ENCODE measurements at regions of chr2 and their contacts with region 1.

Region 1: DNA sequence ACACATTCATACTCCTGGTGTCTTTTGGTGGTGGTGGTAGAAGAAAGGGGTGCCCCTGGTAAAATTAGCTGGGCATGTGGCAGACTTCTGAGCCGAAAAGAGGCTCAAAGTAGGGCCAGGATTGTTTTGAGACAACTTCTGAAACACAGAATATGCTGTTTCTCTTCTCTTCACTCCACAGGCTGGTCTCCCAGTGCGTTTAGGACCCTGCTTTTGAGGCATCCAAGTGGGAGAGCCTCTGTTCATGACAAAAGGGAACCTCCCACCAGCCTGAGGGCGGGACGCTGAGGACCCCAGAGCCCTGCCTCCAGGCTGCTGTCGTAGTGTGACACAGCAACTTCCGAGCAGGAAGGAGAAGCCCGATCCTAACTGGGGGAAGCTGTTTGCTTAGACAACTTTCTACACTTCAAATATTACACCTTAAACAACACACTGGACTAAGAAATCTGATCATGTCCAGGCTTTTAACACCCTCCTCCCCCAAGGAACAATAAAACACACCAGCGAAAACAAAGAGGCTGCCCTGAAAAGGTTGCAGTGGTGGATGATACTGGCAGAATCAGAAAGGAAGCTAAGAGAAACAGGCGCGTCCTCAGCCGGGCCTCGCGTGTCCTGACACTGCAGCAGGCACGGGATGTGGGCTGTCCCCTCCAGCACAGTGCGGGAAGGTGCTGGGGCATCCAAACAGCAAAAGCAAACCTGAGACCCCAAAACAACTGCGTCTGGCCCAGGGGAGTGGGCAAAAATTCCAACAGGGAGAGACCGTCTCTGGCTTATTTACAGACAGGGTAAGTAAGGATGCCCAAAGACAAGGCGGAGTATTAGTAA is 9.3 kb downstream of the SERTAD2 start:
- DNase-seq: peak in 10 of 14 experiments; percentile 26 to 68 (median 44)
- ATAC-seq: peak; percentile 75
- H3K4me3 ChIP-seq: peak overlapping the region; percentile 40
- H3K4me3 Mint-ChIP-seq: peak overlapping the region; percentile 90
- H3K27ac ChIP-seq: peak overlapping the region in 1 of 2 donors; percentile 24
- H3K27ac Mint-ChIP-seq: peak overlapping the region; percentile 73
- H3K4me1 ChIP-seq: peaks cover 37% of the 10 kb centered on the region
- H3K4me1 Mint-ChIP-seq: peaks cover 93% of the 10 kb centered on the region
- H3K27me3 ChIP-seq: no peaks in the 10 kb centered on the region
- H3K27me3 Mint-ChIP-seq: no peaks in the 10 kb centered on the region
- CTCF ChIP-seq: no peak

Region 2: DNA sequence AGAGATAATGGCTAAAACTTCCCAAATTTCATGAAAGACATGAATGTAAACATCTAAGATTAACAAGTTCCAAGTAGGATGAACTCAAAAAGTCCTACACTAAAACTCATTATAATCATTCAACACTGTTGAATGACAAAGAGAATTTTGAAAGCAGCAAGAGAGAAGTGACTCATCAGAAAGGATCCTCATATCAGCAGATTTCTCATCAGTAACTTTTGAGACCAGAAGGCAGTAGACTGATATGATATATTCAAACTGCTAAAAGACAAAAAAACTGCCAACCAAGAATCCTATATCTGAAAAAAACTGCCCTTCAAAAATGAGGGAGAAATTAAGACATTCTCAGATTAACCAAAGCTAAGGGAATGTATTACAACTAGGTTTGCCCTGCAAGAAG is 1724.3 kb before region 1 on chr2:
- CTCF ChIA-PET with region 1: no interaction called
- POLR2A ChIA-PET with region 1: no interaction called
- intact Hi-C with region 1: no loop called
- DNase-seq: no peak
- ATAC-seq: no peak
- H3K4me3 ChIP-seq: no peak overlapping the region
- H3K4me3 Mint-ChIP-seq: no peak overlapping the region
- H3K27ac ChIP-seq: no peak overlapping the region
- H3K27ac Mint-ChIP-seq: no peak overlapping the region
- H3K4me1 ChIP-seq: no peaks in the 10 kb centered on the region
- H3K4me1 Mint-ChIP-seq: no peaks in the 10 kb centered on the region
- H3K27me3 ChIP-seq: no peaks in the 10 kb centered on the region
- H3K27me3 Mint-ChIP-seq: no peaks in the 10 kb centered on the region
- CTCF ChIP-seq: no peak

Region 3: GRCh38 chr2:64574871-64575270 is 69.5 kb before region 1 on chr2:
- CTCF ChIA-PET with region 1: no interaction called
- POLR2A ChIA-PET with region 1: no interaction called
- intact Hi-C with region 1: no loop called
- DNase-seq: no peak
- ATAC-seq: no peak
- H3K4me3 ChIP-seq: no peak overlapping the region
- H3K4me3 Mint-ChIP-seq: no peak overlapping the region
- H3K27ac ChIP-seq: no peak overlapping the region
- H3K27ac Mint-ChIP-seq: peak overlapping the region; percentile 7
- H3K4me1 ChIP-seq: no peaks in the 10 kb centered on the region
- H3K4me1 Mint-ChIP-seq: no peaks in the 10 kb centered on the region
- H3K27me3 ChIP-seq: no peaks in the 10 kb centered on the region
- H3K27me3 Mint-ChIP-seq: no peaks in the 10 kb centered on the region
- CTCF ChIP-seq: no peak

Region 4: GRCh38 chr2:64586883-64587481 is 57.4 kb before region 1 on chr2:
- CTCF ChIA-PET with region 1: interaction called, 6 read pairs
- POLR2A ChIA-PET with region 1: no interaction called
- intact Hi-C with region 1: loop called in 1 of 2 experiments (anchors 2 kb)
- DNase-seq: peak in 3 of 14 experiments; percentile 48 to 71 (median 68)
- ATAC-seq: peak; percentile 72
- H3K4me3 ChIP-seq: no peak overlapping the region
- H3K4me3 Mint-ChIP-seq: no peak overlapping the region
- H3K27ac ChIP-seq: no peak overlapping the region
- H3K27ac Mint-ChIP-seq: no peak overlapping the region
- H3K4me1 ChIP-seq: no peaks in the 10 kb centered on the region
- H3K4me1 Mint-ChIP-seq: no peaks in the 10 kb centered on the region
- H3K27me3 ChIP-seq: no peaks in the 10 kb centered on the region
- H3K27me3 Mint-ChIP-seq: no peaks in the 10 kb centered on the region
- CTCF ChIP-seq: peak; percentile 67

Region 5: GRCh38 chr2:64617631-64618151 is 26.7 kb before region 1 on chr2:
- CTCF ChIA-PET with region 1: interaction called, 12 read pairs
- POLR2A ChIA-PET with region 1: no interaction called
- intact Hi-C with region 1: no loop called
- DNase-seq: peak in 1 of 14 experiments; percentile 19
- ATAC-seq: no peak
- H3K4me3 ChIP-seq: no peak overlapping the region
- H3K4me3 Mint-ChIP-seq: no peak overlapping the region
- H3K27ac ChIP-seq: no peak overlapping the region
- H3K27ac Mint-ChIP-seq: no peak overlapping the region
- H3K4me1 ChIP-seq: no peaks in the 10 kb centered on the region
- H3K4me1 Mint-ChIP-seq: no peaks in the 10 kb centered on the region
- H3K27me3 ChIP-seq: no peaks in the 10 kb centered on the region
- H3K27me3 Mint-ChIP-seq: no peaks in the 10 kb centered on the region
- CTCF ChIP-seq: no peak

Region 6: GRCh38 chr2:64675860-64676259 is 31.5 kb after region 1 on chr2:
- CTCF ChIA-PET with region 1: interaction called, 9 read pairs
- POLR2A ChIA-PET with region 1: no interaction called
- intact Hi-C with region 1: loop called in 1 of 2 experiments (anchors 5 kb)
- DNase-seq: peak in 8 of 14 experiments; percentile 18 to 63 (median 30)
- ATAC-seq: peak; percentile 91
- H3K4me3 ChIP-seq: no peak overlapping the region
- H3K4me3 Mint-ChIP-seq: no peak overlapping the region
- H3K27ac ChIP-seq: no peak overlapping the region
- H3K27ac Mint-ChIP-seq: peak overlapping the region; percentile 40
- H3K4me1 ChIP-seq: peaks cover 9% of the 10 kb centered on the region
- H3K4me1 Mint-ChIP-seq: peaks cover 56% of the 10 kb centered on the region
- H3K27me3 ChIP-seq: no peaks in the 10 kb centered on the region
- H3K27me3 Mint-ChIP-seq: no peaks in the 10 kb centered on the region
- CTCF ChIP-seq: no peak

Region 7: DNA sequence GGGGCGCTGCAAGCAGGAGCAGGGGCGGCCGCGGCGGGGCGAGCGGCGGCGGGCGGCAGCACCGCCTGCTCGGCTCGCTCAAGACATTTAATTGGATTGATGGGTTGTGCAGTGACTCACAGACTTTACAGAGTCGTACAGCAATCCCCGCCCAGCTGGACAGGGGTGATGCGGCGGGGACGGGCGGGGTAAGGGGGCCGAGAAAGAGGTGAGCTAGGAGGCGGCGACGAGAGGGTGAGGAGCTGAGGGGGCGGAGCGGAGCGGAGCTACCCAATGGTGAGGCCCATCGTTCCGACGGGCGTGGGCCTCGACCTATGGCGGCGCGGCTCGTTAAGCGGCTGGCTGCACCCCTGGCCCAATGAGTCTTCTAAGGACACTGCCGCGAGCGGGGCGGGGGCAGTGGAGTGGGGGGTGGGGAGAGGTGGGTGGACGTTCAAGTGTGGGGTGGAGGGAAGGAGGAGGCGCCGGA is 106.5 kb after region 1 on chr2:
- CTCF ChIA-PET with region 1: interaction called, 17 read pairs
- POLR2A ChIA-PET with region 1: interaction called, 395 read pairs
- intact Hi-C with region 1: loop called in 1 of 2 experiments (anchors 2 kb)
- DNase-seq: peak; percentile 92 to 100 (median 96)
- ATAC-seq: peak; percentile 83
- H3K4me3 ChIP-seq: peak overlapping the region; percentile 96
- H3K4me3 Mint-ChIP-seq: peak overlapping the region; percentile 95
- H3K27ac ChIP-seq: peak overlapping the region; percentile 81 to 91
- H3K27ac Mint-ChIP-seq: peak overlapping the region; percentile 92
- H3K4me1 ChIP-seq: peaks cover 16% of the 10 kb centered on the region
- H3K4me1 Mint-ChIP-seq: peaks cover 34% of the 10 kb centered on the region
- H3K27me3 ChIP-seq: no peaks in the 10 kb centered on the region
- H3K27me3 Mint-ChIP-seq: no peaks in the 10 kb centered on the region
- CTCF ChIP-seq: no peak

Region 8: DNA sequence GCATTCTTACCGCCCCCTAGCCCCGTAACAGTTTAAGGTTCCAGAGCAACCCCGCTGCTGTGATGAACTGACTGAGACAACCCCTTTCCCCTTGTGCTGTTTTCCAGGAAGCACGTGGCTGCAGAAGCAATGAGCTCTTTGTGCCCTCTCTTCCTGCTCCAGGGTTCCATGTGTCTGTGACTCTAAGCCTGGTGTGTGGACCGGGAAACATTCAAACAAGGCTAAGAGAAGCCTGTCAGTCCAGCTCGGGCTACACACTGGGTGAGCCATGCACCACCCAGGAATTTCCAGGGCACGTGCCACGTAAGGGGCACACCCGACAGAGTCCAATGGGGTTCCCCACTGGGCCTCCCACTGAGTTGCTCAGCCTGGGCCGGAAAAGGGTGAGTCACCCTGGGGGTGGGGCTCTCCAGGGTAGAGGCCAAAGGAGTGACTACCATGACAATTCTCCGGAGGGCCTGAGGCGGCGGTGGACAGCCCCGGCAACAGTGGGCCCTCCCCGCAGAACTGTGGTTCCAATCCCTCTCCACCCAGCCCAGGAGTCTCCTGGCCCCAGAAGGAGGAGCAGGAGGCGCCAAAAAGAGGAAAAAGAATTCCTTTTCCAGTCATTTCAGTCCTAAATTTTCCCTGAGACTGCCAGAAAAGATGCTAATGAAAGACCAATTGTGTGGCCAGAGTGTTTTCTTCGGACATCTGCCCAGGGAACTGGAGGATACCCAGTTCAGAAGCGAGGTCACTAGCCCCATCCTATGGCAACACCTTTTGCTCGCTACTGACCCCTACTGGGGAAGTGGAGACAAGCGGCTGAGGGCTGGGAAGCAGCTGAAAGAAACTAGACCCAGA is 187.0 kb after region 1 on chr2:
- CTCF ChIA-PET with region 1: interaction called, 32 read pairs
- POLR2A ChIA-PET with region 1: interaction called, 4 read pairs
- intact Hi-C with region 1: loop called (anchors 1 kb)
- DNase-seq: peak; percentile 66 to 93 (median 77)
- ATAC-seq: peak; percentile 87
- H3K4me3 ChIP-seq: peak overlapping the region; percentile 35
- H3K4me3 Mint-ChIP-seq: no peak overlapping the region
- H3K27ac ChIP-seq: no peak overlapping the region
- H3K27ac Mint-ChIP-seq: no peak overlapping the region
- H3K4me1 ChIP-seq: peaks cover 13% of the 10 kb centered on the region
- H3K4me1 Mint-ChIP-seq: peaks cover 5% of the 10 kb centered on the region
- H3K27me3 ChIP-seq: no peaks in the 10 kb centered on the region
- H3K27me3 Mint-ChIP-seq: no peaks in the 10 kb centered on the region
- CTCF ChIP-seq: peak; percentile 93

Region 9: DNA sequence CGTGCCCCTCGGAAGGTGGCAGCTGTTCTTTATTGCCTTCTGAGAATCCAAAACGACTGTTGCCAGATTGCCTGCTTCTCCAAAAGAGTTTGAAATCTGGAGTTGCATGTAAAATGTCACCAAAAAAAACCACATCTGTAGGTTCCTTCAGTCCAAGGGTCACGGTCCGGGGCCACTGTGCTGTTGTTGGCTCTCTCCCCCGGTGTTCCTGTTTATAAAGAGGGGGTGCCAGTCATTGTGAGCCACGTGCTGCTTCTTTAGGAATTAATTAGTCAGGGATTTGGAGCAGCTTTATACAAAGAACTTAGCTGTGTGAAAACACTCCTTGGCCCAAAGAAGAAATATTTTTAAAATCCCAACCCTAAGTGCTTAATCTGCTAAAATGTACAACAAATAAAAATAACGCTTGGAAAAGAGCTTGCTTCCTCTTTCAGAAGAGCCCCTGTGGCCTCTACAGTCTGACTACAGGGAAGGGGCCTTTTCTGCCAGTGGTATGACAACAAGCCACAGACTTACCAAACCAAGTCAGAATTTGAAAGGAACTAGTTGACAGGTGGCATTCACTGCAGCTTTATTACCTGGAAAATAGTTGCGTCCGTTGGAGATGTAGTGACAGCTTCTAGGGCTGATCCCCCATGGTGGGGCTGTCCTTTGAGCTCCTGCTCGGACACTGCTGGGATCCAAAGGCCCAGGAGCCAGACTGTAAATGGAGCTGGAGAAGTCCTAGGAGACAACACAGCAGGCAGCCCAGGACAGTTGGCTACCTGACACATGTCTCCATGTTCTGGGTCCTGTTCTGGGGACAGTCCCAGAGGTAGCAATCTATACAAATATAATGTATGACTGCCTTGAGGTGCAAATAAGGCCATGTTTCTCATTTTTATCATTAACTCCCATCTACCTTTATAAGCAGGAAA is 260.3 kb after region 1 on chr2:
- CTCF ChIA-PET with region 1: no interaction called
- POLR2A ChIA-PET with region 1: no interaction called
- intact Hi-C with region 1: no loop called
- DNase-seq: peak in 1 of 14 experiments; percentile 8
- ATAC-seq: no peak
- H3K4me3 ChIP-seq: no peak overlapping the region
- H3K4me3 Mint-ChIP-seq: no peak overlapping the region
- H3K27ac ChIP-seq: no peak overlapping the region
- H3K27ac Mint-ChIP-seq: no peak overlapping the region
- H3K4me1 ChIP-seq: no peaks in the 10 kb centered on the region
- H3K4me1 Mint-ChIP-seq: no peaks in the 10 kb centered on the region
- H3K27me3 ChIP-seq: no peaks in the 10 kb centered on the region
- H3K27me3 Mint-ChIP-seq: peaks cover 7% of the 10 kb centered on the region
- CTCF ChIP-seq: no peak